ENCODE measurements at regions of chr4 and their contacts with region 1.

Region 1: GRCh38 chr4:168847771-168848511 is 162.1 kb downstream of the CBR4 start:
- DNase-seq: no peak

Region 2: DNA sequence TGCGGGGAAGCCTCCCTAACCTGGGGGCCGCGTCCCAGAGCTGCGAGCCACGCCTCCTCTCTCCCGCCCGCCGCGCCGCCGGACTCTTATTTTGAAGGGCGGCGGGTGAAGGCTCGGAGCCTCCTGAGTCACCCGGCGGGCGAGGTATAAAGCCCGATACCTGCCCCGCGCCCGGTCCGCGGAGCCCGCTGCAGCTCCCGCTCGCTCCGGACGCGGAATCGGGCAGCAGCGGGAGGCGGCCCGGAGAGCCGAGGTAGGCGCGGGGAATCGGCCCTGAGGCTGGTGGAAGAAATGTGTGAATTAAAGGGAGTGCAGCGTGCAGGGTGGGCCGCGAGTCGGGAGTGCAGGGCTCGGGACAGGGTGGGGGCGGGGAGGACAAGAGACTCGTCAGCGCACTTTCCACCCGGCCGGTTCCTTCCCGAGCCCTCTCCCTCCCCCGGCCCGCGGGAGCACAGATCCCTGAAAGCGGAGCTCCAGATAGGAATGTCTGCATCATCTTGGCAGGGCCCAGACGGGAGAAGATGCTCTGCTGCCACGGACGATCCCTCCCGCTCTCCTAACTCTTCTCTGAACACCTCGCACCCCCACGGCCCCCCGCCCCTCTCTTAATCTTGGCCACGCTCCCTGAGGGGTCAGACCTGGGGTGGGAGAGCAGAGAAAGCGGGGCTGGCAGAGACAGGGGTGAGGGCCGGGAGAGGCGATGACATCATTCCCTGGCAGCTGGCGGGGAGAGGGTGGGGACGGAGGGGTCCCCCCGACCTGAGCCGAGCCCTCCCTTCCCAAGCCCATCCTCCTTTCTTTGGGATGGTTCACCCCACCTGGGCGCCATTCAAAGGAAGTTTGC is 15.8 kb before region 1 on chr4:
- intact Hi-C with region 1: loop called in 1 of 2 experiments (anchors 1 kb)
- DNase-seq: peak; percentile 95

Region 3: DNA sequence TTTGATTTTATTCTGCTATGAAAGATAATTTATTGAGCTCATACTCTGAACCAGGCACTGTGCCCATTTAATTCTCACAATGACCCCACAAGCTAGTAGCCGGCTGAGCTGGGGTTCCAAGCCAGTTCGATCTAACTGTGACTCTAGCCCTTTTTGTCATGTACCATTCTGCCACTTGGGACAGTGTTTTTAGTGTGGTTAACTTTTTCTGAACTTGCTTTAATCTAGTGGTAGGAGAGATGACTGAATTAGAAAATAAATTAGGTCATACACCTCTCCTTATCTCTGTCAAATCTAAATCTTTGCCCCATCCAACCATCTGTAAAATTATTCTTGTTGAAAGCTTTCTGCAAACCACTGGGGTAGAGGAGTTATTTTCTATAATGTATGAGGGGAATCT is 26.1 kb after region 1 on chr4:
- intact Hi-C with region 1: loop called in 1 of 2 experiments (anchors 2 kb)
- DNase-seq: no peak